ENCODE measurements at regions of chr17 and their contacts with region 1.

Region 1: DNA sequence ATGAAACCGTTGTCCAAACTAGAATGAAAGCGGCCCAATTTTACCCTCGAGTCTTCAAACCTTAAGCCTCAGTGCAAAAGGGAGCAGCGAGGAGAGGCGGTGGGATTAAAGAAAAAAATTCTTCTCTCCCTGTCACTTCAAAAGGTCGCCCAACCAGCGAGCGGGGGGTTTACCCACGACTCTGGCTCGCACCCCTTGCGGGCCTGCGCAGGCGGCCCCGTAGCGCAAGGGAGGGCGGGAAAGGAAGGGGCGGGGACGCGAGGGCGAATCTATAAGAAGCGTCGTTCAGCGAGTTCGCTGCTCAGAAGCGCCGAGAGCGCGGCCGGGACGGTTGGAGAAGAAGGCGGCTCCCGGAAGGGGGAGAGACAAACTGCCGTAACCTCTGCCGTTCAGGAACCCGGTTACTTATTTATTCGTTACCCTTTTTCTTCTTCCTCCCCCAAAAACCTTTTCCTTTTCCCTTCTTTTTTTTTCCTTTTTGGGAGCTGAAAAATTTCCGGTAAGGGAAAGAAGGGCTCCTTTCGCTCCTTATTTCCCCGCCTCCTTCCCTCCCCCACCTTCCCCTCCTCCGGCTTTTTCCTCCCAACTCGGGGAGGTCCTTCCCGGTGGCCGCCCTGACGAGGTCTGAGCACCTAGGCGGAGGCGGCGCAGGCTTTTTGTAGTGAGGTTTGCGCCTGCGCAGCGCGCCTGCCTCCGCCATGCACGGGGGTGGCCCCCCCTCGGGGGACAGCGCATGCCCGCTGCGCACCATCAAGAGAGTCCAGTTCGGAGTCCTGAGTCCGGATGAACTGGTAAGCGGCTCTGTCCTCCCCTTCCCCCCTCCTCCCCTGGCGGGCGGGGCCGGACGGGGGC is at the start of gene POLR2A:
- DNase-seq: peak; percentile 97 to 99 (median 99)
- H3K4me3 ChIP-seq: peak within 1 kb of the TSS; percentile 92 to 95
- H3K4me3 Mint-ChIP-seq: peak within 1 kb of the TSS; percentile 96 to 100 (median 98)
- H3K27ac ChIP-seq: peak within 1 kb of the TSS; percentile 99
- H3K27ac Mint-ChIP-seq: peak within 1 kb of the TSS; percentile 99 to 100 (median 100)
- H3K4me1 ChIP-seq: peaks cover 59% of the 10 kb centered on the region
- H3K4me1 Mint-ChIP-seq: peaks cover 47 to 89% (median 65%) of the 10 kb centered on the region in 4 donors
- H3K27me3 ChIP-seq: no peaks in the 10 kb centered on the region
- H3K27me3 Mint-ChIP-seq: no peaks in the 10 kb centered on the region
- total RNA-seq, gene POLR2A: 178 to 191 TPM

Region 2: GRCh38 chr17:7252176-7253043 is 231.9 kb before region 1 on chr17 and contains the start of gene ELP5:
- CTCF ChIA-PET with region 1: no interaction called
- POLR2A ChIA-PET with region 1: interaction called, 4 read pairs
- intact Hi-C with region 1: loop called (anchors 2 kb)
- DNase-seq: peak in 4 of 5 donors; percentile 86 to 92 (median 88)
- H3K4me3 ChIP-seq: peak within 1 kb of the TSS; percentile 71 to 92
- H3K4me3 Mint-ChIP-seq: peak within 1 kb of the TSS; percentile 91 to 97 (median 95)
- H3K27ac ChIP-seq: peak within 1 kb of the TSS; percentile 98
- H3K27ac Mint-ChIP-seq: peak within 1 kb of the TSS; percentile 98 to 100 (median 99)
- H3K4me1 ChIP-seq: peaks cover 37% of the 10 kb centered on the region
- H3K4me1 Mint-ChIP-seq: peaks cover 25 to 49% (median 38%) of the 10 kb centered on the region in 4 donors
- H3K27me3 ChIP-seq: no peaks in the 10 kb centered on the region
- H3K27me3 Mint-ChIP-seq: no peaks in the 10 kb centered on the region
- total RNA-seq, gene ELP5: 29.8 to 30.9 TPM

Region 3: DNA sequence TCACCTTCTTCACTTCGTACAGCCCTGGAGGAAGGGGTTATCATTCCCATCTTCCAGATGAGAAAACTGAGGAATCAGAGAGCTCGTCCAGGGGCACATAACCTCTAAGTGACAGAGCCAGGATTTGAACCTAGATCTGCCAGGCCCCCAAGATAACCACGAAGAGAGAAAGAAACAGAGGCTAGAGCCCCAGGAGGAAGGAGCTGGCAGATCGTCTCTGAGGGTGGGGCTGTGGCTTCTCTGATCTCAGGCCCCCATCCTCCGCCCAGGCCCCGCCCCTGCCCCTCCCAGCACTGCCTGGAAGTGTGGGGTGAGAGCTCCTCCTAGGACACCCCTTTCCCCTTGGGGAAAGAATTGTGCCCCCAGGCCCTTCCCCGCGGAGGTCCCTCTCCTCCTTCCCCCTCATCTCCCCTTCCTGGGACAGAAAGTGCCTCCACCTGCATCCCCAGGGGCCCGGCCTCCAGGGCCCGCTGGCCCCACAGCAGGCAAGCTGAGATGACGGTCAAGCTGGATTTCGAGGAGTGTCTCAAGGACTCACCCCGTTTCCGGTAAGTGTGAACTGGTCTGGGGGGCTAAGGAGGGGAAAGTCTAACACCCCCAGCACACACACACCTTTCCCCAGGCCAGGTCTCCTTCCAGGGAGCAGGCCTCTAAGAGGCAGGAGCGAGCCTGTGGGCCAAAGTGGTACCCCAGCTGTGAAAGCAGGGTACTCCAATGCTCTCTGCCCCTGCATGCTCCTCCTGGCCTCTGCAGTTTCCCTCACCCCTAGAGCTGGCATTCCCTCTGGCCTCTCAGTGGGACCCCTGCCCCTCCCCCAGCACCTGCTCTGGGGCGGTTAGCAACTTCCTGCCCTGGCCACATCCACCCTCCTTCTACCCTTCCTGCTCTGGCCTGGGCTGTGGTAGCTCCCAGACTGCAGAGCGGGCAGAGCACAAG is 147.8 kb before region 1 on chr17 and contains the start of gene ACAP1:
- CTCF ChIA-PET with region 1: no interaction called
- POLR2A ChIA-PET with region 1: interaction called, 36 read pairs
- intact Hi-C with region 1: no loop called
- DNase-seq: peak; percentile 78 to 90 (median 81)
- H3K4me3 ChIP-seq: peak within 1 kb of the TSS; percentile 94 to 98
- H3K4me3 Mint-ChIP-seq: peak within 1 kb of the TSS; percentile 88 to 99 (median 98)
- H3K27ac ChIP-seq: peak within 1 kb of the TSS; percentile 74
- H3K27ac Mint-ChIP-seq: peak within 1 kb of the TSS; percentile 89 to 99 (median 97)
- H3K4me1 ChIP-seq: peaks cover 81% of the 10 kb centered on the region
- H3K4me1 Mint-ChIP-seq: peaks cover 38 to 75% (median 56%) of the 10 kb centered on the region in 4 donors
- H3K27me3 ChIP-seq: no peaks in the 10 kb centered on the region
- H3K27me3 Mint-ChIP-seq: no peaks in the 10 kb centered on the region
- total RNA-seq, gene ACAP1: 507 to 516 TPM

Region 4: GRCh38 chr17:7444682-7445618 is 39.3 kb before region 1 on chr17 and contains the start of gene CHRNB1:
- CTCF ChIA-PET with region 1: interaction called, 3 read pairs
- POLR2A ChIA-PET with region 1: interaction called, 176 read pairs
- intact Hi-C with region 1: no loop called
- DNase-seq: peak in 1 of 5 donors; percentile 16
- H3K4me3 ChIP-seq: peak within 1 kb of the TSS in 1 of 2 donors; percentile 11
- H3K4me3 Mint-ChIP-seq: peak within 1 kb of the TSS; percentile 75 to 88 (median 83)
- H3K27ac ChIP-seq: no peak within 1 kb of the TSS
- H3K27ac Mint-ChIP-seq: peak within 1 kb of the TSS in 5 of 7 donors; percentile 29 to 76 (median 57)
- H3K4me1 ChIP-seq: peaks cover 31% of the 10 kb centered on the region
- H3K4me1 Mint-ChIP-seq: peaks cover 11 to 40% (median 28%) of the 10 kb centered on the region in 4 donors
- H3K27me3 ChIP-seq: peaks cover 45% of the 10 kb centered on the region
- H3K27me3 Mint-ChIP-seq: peaks cover 39 to 58% of the 10 kb centered on the region in 2 donors
- total RNA-seq, gene CHRNB1: 9.1 to 9.5 TPM

Region 5: DNA sequence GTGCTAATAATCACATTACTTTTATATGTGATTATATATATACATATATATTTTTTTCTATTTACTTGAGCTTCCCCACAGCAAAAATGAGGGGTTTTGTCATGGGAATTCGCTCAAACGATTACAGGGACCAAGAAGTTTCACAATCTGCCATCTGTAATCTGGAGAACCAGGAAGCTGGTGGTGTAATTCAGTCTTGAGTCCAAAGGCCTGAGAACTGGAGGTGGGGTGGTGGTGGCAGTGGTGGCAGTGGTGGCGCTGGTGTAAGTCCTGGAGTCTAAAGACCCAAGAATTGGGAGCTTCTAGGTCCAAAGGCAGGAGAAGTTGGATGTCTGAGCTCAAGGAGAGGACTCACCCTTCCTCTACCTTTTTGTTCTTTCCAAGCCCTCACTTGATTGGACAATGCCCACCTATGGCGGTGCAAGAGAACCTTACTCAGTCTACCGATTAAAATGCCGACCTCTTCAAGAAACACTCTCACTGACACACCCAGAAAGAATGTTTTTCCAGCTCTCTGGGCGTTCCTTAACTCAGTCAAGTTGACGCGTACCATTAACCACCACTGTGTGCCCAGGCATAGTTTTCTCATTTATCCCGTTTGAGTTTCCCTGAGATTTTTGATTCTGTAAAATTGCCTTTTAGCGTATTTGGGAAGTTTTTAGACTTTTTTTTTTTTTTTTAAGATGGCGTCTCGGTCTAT is 31.8 kb after region 1 on chr17:
- CTCF ChIA-PET with region 1: interaction called, 11 read pairs
- POLR2A ChIA-PET with region 1: interaction called, 5 read pairs
- intact Hi-C with region 1: no loop called
- DNase-seq: no peak
- H3K4me3 ChIP-seq: no peak overlapping the region
- H3K4me3 Mint-ChIP-seq: no peak overlapping the region
- H3K27ac ChIP-seq: no peak overlapping the region
- H3K27ac Mint-ChIP-seq: peak overlapping the region in 4 of 7 donors; percentile 17 to 74 (median 50)
- H3K4me1 ChIP-seq: no peaks in the 10 kb centered on the region
- H3K4me1 Mint-ChIP-seq: peaks cover 0 to 2% (median 0%) of the 10 kb centered on the region in 4 donors
- H3K27me3 ChIP-seq: no peaks in the 10 kb centered on the region
- H3K27me3 Mint-ChIP-seq: no peaks in the 10 kb centered on the region

Region 6: DNA sequence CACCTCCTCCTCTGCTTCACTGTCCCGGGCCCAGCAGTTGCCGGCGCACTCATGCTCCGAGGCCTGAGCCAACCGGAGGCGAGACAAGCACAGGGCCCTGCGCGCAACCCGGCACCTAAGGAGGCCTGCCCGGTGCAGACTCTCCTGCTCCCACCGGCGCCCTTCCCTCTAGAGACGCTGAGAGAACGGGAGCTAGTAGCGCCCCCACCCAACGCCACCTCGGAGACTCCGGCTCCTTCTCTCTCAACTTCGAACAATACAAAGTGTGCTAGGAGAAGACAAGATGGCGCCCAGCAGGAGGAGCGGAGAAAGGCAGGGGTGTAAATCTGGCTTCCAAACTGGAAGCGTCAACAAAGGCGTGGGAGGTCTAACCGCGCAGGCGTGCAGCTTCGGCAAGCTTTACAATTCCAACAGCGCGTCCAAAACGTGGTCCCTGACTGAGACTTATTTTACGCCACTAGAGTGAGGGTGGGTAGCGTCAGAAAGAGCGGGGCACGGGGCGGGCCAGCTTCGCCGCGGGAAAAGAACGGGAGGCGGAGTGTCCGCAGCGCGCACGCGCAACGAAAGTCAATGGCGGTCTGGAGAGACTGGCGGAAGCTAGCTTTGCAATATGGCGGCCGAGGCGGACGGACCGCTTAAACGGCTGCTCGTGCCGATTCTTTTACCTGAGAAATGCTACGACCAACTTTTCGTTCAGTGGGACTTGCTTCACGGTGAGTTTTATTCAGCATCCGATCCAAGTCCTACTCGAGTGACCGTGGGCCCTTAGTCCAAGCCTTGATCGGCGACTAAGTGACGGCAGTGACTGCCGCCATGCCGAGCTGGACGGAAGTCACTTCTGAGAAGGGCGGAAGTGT is 99.2 kb after region 1 on chr17 and contains the start of gene MPDU1:
- CTCF ChIA-PET with region 1: no interaction called
- POLR2A ChIA-PET with region 1: interaction called, 25 read pairs
- intact Hi-C with region 1: no loop called
- DNase-seq: peak; percentile 95 to 97 (median 97)
- H3K4me3 ChIP-seq: peak within 1 kb of the TSS; percentile 91 to 92
- H3K4me3 Mint-ChIP-seq: peak within 1 kb of the TSS; percentile 99 to 100 (median 100)
- H3K27ac ChIP-seq: peak within 1 kb of the TSS; percentile 97
- H3K27ac Mint-ChIP-seq: peak within 1 kb of the TSS; percentile 99 to 100 (median 100)
- H3K4me1 ChIP-seq: peaks cover 50% of the 10 kb centered on the region
- H3K4me1 Mint-ChIP-seq: peaks cover 20 to 65% (median 43%) of the 10 kb centered on the region in 4 donors
- H3K27me3 ChIP-seq: no peaks in the 10 kb centered on the region
- H3K27me3 Mint-ChIP-seq: no peaks in the 10 kb centered on the region
- total RNA-seq, gene MPDU1: 23.8 to 25.0 TPM

Region 7: DNA sequence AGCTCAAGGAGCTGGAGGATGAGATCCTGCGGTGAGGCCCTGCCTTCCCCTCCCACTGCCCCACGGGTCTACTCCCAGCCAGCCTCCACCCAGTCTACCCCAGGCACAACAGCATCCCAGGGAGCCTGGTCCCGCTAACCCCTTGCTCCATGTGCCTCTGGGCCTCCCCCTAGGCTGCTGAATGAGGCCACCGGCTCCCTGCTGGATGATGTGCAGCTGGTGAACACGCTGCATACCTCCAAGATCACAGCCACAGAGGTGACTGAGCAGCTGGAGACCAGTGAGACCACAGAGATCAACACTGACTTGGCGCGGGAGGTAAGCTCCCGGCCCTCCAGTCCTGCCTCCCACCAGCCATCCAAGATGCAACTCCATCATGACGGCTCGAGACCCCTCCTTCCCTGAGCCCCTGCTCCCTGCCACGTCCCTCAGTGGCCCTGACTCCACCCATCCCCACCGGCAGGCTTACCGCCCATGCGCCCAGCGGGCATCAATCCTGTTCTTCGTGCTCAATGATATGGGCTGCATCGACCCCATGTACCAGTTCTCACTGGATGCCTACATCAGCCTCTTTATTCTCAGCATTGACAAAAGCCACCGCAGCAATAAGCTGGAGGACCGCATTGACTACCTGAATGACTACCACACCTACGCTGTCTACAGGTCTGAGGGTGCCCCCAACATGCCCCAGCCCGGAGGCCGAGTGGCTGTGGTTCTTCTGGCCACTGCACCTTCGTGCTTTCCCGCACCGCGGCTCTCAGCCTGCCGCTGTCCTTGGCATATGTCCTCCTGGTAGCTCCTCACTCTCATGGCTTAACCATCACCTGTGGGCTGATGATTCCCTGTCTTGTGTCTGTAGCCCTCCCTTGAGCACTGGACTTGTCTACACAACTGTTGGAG is 334.7 kb after region 1 on chr17:
- CTCF ChIA-PET with region 1: no interaction called
- POLR2A ChIA-PET with region 1: no interaction called
- intact Hi-C with region 1: no loop called
- DNase-seq: no peak
- H3K4me3 ChIP-seq: no peak overlapping the region
- H3K4me3 Mint-ChIP-seq: no peak overlapping the region
- H3K27ac ChIP-seq: no peak overlapping the region
- H3K27ac Mint-ChIP-seq: no peak overlapping the region
- H3K4me1 ChIP-seq: no peaks in the 10 kb centered on the region
- H3K4me1 Mint-ChIP-seq: no peaks in the 10 kb centered on the region
- H3K27me3 ChIP-seq: no peaks in the 10 kb centered on the region
- H3K27me3 Mint-ChIP-seq: no peaks in the 10 kb centered on the region